Mammary epithelial cell (primary cell): ENCODE measurements at regions of chr1 and their contacts with region 1.

Region 1: GRCh38 chr1:45490626-45491486 is at the start of gene TESK2:
- DNase-seq: peak; percentile 100
- H3K4me3 ChIP-seq: peak within 1 kb of the TSS; percentile 72 to 92 (median 83)
- H3K27ac ChIP-seq: peak within 1 kb of the TSS; percentile 49
- H3K4me1 ChIP-seq: peaks cover 7% of the 10 kb centered on the region
- H3K27me3 ChIP-seq: no peaks in the 10 kb centered on the region
- CTCF ChIP-seq: no peak
- total RNA-seq, gene TESK2: 3.8 to 4.5 TPM

Region 2: GRCh38 chr1:44730741-44731512 is 759.9 kb before region 1 on chr1 and contains the start of gene RNU5D-1:
- CTCF ChIA-PET with region 1: interaction called, 3 read pairs
- dilution Hi-C with region 1: no loop called
- in situ Hi-C with region 1: no loop called
- intact Hi-C with region 1: loop called (anchors 5 kb)
- DNase-seq: peak; percentile 99
- H3K4me3 ChIP-seq: peak within 1 kb of the TSS in 1 of 3 experiments; percentile 16
- H3K27ac ChIP-seq: peak within 1 kb of the TSS; percentile 100
- H3K4me1 ChIP-seq: peaks cover 13% of the 10 kb centered on the region
- H3K27me3 ChIP-seq: no peaks in the 10 kb centered on the region
- CTCF ChIP-seq: peak; percentile 77 to 86
- total RNA-seq, gene RNU5D-1: not detected

Region 3: DNA sequence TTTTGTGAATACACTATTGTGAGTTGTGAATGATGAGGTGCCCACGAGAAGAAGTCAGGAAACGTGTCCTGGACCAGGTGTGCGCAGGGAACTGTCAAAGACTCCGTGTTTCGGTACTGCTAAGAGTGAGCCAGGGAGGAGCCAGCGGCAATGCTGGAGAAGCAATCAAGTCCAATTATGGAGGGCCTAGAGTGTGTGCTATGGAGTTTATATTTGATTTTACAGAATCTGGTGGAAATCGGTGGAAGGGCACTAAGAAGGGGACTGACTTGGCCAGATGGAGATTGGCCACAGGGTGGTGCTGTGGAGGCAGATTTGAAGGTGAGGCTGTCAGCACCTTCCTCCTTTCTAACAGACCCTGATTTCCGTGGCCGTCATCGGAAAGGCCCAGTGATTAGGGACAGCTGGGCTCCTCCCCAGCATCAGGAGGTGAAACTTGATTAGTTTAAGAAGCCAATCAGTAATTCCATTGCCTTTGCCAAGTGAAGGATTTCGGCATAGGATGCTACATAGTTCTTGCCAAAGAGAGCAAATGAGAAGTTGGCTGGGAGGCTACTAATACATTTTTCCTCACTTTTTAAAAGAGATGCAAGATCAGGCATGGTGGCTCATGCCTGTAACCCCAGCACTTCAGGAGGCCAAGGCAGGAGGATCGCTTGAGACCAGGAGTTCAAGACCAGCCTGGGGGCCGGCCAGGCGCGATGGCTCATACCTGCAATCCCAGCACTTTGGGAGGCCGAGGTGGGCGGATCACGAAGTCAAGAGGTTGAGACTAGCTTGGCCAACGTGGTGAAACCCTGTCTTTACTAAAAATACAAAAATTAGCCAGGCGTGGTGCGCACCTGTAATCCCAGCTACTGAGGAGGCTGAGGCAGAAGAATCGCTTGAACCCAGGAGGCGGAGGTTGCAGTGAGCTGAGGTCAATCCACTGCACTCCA is 654.8 kb before region 1 on chr1:
- CTCF ChIA-PET with region 1: no interaction called
- dilution Hi-C with region 1: no loop called
- in situ Hi-C with region 1: no loop called
- intact Hi-C with region 1: loop called (anchors 10 kb)
- DNase-seq: peak; percentile 66
- H3K4me3 ChIP-seq: no peak overlapping the region
- H3K27ac ChIP-seq: no peak overlapping the region
- H3K4me1 ChIP-seq: no peaks in the 10 kb centered on the region
- H3K27me3 ChIP-seq: no peaks in the 10 kb centered on the region
- CTCF ChIP-seq: peak; percentile 89 to 91

Region 4: GRCh38 chr1:45018599-45019230 is 472.1 kb before region 1 on chr1:
- CTCF ChIA-PET with region 1: no interaction called
- dilution Hi-C with region 1: no loop called
- in situ Hi-C with region 1: loop called (anchors 10 kb)
- intact Hi-C with region 1: loop called (anchors 1 kb)
- DNase-seq: peak; percentile 70
- H3K4me3 ChIP-seq: no peak overlapping the region
- H3K27ac ChIP-seq: no peak overlapping the region
- H3K4me1 ChIP-seq: peaks cover 3% of the 10 kb centered on the region
- H3K27me3 ChIP-seq: no peaks in the 10 kb centered on the region
- CTCF ChIP-seq: peak; percentile 90 to 94

Region 5: DNA sequence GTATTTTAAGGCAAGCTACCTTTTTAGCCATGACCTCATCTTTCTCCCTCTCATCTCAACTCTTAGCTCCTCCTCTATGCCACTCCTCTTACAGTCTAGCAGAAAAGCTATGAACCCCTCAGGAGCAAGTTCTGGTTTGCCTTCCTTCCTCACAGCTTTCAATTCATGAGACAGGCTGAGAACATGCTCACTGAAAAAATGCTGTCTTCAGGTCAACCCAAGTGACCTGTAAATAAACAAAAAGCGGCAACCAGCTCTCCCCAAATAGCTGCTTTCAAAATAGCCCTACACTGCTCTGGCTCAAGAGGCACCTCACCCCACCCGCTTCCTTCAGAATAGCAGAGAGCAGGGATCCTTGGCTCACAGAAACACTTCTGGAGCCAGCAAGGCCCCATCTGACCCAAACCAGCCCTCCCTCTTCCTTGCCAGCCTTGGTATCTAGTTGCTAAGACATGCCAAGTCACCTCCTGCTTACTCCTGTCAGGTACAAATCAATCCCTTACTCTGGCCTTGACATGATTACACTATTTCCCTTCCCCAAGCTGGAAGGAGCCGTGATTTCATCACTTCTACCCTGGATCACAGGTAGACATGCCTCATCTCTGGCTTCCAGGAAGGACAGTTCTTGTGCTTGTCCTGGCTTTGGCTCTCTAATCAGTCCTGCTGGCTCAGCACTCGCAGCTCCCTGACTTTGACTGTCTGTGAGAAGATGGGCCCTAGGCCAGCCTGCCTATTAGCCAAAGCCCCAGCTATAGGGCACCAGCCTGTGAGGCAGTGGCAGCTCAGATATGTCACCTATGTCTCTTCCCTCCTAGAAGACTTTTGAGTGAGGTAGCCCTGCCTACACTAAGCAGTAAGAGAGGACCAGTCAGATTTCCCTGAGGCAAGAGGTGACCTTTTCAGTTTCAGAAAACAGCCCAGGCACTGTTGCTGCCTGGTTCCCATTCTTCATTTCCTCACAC is 141.9 kb before region 1 on chr1:
- CTCF ChIA-PET with region 1: no interaction called
- dilution Hi-C with region 1: no loop called
- in situ Hi-C with region 1: loop called in 1 of 2 experiments (anchors 5 kb)
- intact Hi-C with region 1: loop called (anchors 5 kb)
- DNase-seq: peak; percentile 20
- H3K4me3 ChIP-seq: no peak overlapping the region
- H3K27ac ChIP-seq: peak overlapping the region; percentile 9
- H3K4me1 ChIP-seq: peaks cover 21% of the 10 kb centered on the region
- H3K27me3 ChIP-seq: no peaks in the 10 kb centered on the region
- CTCF ChIP-seq: no peak

Region 6: GRCh38 chr1:45470306-45470798 is 20.5 kb before region 1 on chr1:
- CTCF ChIA-PET with region 1: no interaction called
- dilution Hi-C with region 1: no loop called
- in situ Hi-C with region 1: no loop called
- intact Hi-C with region 1: no loop called
- DNase-seq: no peak
- H3K4me3 ChIP-seq: no peak overlapping the region
- H3K27ac ChIP-seq: no peak overlapping the region
- H3K4me1 ChIP-seq: no peaks in the 10 kb centered on the region
- H3K27me3 ChIP-seq: no peaks in the 10 kb centered on the region
- CTCF ChIP-seq: no peak

Region 7: DNA sequence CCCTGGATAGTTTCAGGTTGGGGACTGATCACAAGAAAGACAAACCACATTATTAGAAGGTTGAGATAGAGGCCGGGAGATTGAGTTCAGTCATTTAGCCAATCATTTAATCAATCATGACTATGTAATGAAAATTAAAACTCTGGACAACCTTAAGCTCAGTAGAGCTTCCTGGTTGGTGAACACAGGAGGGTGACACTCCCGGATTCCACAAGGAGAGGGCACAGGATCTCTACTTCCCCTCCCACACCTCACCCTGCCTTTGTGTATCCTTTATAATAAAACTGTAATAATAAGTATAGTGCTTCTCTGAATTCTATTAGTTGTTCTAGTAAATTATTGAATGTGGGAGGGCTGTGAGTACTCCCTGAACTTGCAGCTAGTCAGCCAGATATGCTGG is 491.5 kb after region 1 on chr1:
- CTCF ChIA-PET with region 1: no interaction called
- dilution Hi-C with region 1: no loop called
- in situ Hi-C with region 1: no loop called
- intact Hi-C with region 1: no loop called
- DNase-seq: no peak
- H3K4me3 ChIP-seq: no peak overlapping the region
- H3K27ac ChIP-seq: no peak overlapping the region
- H3K4me1 ChIP-seq: no peaks in the 10 kb centered on the region
- H3K27me3 ChIP-seq: no peaks in the 10 kb centered on the region
- CTCF ChIP-seq: no peak